ENCODE measurements at regions of chr17 and their contacts with region 1.

Region 1: DNA sequence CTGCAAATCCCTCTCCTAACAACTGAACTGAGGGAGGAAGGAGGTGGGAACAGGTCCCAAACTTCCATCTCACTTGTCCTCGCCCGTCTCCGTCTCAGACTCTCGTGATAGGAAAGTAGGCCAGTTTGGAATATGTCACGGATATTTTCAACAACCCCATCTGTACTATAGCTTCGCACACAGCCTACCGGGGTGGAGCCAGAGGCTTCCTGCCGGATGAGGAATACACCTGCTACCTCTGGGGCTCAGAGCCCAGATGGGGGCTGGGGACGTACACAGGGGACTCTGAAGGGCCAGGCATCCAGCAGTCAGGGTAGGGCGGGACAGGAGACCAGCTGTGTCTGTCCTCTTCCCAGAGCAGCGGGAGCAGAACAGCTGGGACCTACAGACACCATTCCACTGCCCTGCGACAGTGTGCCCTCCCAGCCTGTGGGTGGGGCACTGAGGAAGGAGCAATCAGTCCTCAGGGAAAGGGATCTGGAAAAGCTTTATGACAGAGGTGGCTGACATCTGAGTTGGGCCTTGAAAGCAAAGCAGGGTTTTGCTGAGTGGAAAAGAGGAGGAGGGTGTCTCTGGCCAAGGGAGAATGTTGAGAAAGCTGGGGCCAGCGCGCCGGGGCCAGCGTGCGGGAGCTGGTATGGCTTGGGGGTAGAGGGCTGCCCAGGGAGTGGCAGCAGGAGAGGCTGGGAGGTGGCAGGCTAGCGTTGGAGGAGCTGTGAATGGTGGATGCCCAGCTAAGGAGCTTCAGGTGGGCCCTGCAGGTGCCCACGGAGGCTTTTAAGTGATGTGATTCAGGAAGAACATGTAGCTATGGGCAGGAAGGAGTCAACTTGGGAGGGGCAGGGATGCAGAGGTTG is 11.5 kb upstream of the SRCIN1 start:
- DNase-seq: no peak
- CTCF ChIP-seq: no peak

Region 2: DNA sequence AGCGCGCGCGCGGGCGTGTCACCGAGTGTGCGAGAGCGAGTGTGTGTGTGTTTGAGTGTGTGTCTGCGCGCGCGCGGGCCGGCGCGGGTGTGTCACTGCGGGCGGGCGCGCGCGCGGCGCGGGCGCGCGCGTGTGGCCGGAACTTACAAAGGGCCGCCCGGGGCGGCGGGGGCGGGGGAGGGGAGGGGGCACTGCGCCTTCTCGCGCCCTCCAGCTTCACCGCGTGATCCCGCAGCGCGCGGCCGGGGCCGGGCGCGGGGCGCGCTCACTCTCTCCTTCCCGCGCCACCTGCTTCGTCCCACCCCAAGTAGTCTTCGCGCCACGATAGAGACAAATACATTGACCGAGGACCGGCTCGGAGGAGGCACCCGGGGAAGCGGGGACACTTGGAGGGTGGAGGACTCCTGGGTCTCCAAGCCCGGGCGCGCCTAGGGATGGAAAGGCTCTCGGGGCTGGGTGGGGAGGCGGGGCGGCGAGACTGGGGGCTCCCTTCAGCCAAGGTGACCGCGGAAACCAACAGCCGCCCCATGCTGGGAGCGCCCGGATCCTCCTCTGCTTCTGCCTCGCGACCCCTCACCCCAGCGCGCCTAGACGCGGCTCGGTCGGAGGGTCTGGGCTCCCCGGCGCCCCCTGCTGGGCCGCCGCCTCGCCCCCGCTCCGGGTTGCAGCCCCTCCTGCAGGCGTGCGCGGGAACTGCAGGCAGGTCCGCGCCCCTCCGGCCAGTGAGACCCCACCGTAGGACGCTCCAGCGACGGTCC is 11.2 kb before region 1 on chr17 and contains the start of gene SRCIN1:
- CTCF ChIA-PET with region 1: interaction called, 18 read pairs
- POLR2A ChIA-PET with region 1: no interaction called
- DNase-seq: peak; percentile 79
- CTCF ChIP-seq: peak; percentile 99

Measured in GM10248 (cell line).